Astrocyte of the cerebellum (primary cell): ENCODE measurements at regions of chr11 and their contacts with region 1.

Region 1: GRCh38 chr11:126202646-126203359 is 8.6 kb downstream of the RPUSD4 start:
- DNase-seq: no peak
- H3K4me3 ChIP-seq: no peak overlapping the region
- CTCF ChIP-seq: no peak

Region 2: DNA sequence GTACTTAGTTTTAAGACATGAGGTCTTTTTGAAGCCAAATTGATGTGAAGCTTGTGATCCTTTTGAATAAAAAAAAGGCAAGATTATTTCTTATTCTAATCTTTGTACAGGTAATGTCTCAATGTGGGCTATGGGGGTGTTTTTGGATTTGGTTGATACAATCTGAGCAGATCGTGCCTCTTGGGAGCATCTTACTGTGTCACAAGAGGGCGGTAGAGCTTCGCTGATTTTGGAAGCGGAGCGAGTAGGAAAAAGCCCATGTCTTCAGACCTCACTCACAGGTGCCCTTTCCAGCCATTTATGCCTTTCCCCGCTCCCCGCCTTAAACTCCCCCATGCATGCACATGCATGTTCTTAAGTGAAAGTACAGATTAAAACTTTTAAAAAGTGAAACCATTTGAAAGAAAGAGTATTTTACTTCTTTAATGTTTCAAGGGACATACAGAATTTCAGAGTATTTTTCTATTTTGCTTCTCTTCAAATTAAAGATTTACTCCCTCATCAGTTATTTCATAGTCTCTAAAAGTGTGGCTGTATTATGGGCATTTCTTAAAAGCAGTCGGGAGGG is 279.7 kb before region 1 on chr11:
- in situ Hi-C with region 1: loop called (anchors 5 kb)
- DNase-seq: peak; percentile 41
- H3K4me3 ChIP-seq: no peak overlapping the region
- CTCF ChIP-seq: peak; percentile 90